ENCODE measurements at regions of chr2 and their contacts with region 1.

Region 1: GRCh38 chr2:177692828-177693269 is 300.3 kb downstream of the AGPS start:
- DNase-seq: peak; percentile 77
- H3K4me3 Mint-ChIP-seq: no peak overlapping the region
- H3K27ac Mint-ChIP-seq: peak overlapping the region; percentile 59
- H3K4me1 Mint-ChIP-seq: peaks cover 5% of the 10 kb centered on the region
- H3K27me3 Mint-ChIP-seq: no peaks in the 10 kb centered on the region
- CTCF ChIP-seq: peak; percentile 30

Region 2: DNA sequence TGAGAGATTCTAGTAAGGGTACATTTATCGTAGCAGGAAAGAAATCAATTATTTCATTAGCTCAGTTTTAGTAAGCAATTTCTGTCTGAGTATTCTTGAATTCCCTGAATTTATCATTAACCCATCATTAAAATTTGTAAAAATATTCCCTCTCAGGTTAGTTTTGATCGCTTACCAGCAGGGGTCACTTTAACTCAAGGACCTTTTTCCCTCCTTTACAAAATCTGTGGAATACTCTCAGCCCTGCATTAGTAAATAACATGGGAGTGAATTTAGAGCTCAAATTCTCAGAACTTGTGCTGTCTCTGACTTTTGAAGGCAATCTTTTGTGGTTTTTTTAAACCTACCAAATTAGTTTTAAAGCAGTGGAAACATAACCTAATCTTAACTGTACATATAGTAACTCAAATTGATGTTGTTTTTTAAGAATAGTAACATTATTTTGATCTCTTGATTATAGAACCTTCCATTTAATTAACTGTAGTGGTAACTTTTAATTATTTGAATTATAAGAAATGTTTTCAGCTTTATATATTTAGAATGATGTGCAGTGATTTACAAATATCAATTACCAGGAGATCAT is 203.0 kb before region 1 on chr2:
- CTCF ChIA-PET with region 1: interaction called, 4 read pairs
- POLR2A ChIA-PET with region 1: interaction called, 7 read pairs
- intact Hi-C with region 1: loop called (anchors 10 kb)
- DNase-seq: peak; percentile 52
- H3K4me3 Mint-ChIP-seq: no peak overlapping the region
- H3K27ac Mint-ChIP-seq: no peak overlapping the region
- H3K4me1 Mint-ChIP-seq: no peaks in the 10 kb centered on the region
- H3K27me3 Mint-ChIP-seq: no peaks in the 10 kb centered on the region
- CTCF ChIP-seq: peak; percentile 55

Region 3: DNA sequence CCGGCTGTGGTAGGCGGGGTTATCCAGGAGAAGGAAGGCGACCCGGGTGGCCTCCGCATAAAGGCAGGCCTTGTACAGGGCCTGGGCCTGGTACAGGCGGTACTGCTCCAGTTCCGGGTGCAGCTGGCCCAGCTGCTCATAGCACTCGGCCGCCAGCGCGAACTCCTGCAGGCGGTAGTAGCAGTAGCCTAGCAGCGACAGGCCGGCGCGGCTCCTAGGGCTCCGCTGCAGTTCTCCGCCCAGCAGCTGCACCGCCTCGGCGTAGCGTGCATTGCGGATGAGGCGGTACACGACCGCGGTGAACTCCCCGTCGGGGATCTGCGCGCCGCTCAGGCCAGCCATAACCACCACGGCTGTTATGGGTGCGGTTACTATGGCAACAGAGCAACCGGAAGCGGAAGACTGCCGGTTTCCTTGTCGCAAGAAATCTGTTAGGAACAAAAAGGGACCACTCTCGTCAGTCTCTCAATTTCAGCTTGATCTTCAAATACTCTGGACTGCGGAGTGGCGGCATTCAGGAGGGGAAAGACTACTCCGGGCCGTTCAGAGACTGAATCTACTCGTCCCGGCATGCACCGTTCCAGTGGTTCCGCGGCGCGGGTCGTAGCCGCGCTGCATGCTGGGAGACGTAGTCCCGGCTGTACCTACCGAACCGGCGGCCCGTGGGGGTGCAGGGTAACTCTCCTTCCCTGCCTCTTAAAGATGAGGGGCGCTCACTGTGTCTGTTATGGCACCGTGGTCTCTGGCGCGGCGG is 140.2 kb before region 1 on chr2:
- CTCF ChIA-PET with region 1: interaction called, 6 read pairs
- POLR2A ChIA-PET with region 1: no interaction called
- intact Hi-C with region 1: loop called (anchors 5 kb)
- DNase-seq: peak; percentile 84
- H3K4me3 Mint-ChIP-seq: peak overlapping the region; percentile 95
- H3K27ac Mint-ChIP-seq: peak overlapping the region; percentile 100
- H3K4me1 Mint-ChIP-seq: peaks cover 4% of the 10 kb centered on the region
- H3K27me3 Mint-ChIP-seq: no peaks in the 10 kb centered on the region
- CTCF ChIP-seq: no peak

Region 4: DNA sequence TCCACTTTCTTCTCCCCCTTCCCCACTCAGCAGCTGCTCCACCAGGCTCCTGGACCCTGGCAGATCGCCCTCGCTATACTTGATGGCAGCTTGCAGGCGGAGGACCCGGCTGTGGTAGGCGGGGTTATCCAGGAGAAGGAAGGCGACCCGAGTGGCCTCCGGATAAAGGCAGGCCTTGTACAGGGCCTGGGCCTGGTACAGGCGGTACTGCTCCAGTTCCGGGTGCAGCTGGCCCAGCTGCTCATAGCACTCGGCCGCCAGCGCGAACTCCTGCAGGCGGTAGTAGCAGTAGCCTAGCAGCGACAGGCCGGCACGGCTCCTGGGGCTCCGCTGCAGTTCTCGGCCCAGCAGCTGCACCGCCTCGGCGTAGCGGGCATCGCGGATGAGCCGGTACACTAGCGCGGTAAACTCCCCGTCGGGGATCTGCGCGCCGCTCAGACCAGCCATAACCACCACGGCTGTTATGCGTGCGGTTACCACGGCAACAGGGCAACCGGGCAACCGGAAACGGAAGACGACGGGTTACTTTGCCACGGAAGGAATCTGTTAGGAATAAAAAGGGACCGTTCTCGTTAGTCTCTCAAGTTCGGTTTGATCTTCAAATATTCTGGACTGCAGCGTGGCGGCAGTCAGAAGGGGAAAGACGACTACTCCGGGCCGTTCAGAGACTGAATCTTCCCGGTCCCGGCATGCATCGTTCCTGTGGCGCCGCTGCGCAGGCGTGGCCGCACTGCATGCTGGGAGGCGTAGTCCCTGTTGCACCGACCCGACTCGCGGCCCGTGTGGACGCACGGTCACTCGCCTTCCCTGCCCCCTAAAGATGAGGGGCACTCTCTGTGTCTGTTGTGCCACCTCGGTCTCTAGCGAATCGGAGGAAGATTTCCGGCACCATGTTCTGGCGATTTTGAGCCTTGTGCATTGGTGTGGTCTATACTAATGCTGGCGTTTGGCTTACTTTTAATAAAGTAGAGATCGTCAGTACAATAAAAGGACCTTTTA is 74.3 kb before region 1 on chr2:
- CTCF ChIA-PET with region 1: no interaction called
- POLR2A ChIA-PET with region 1: no interaction called
- intact Hi-C with region 1: loop called (anchors 5 kb)
- DNase-seq: peak; percentile 85
- H3K4me3 Mint-ChIP-seq: peak overlapping the region; percentile 91
- H3K27ac Mint-ChIP-seq: peak overlapping the region; percentile 100
- H3K4me1 Mint-ChIP-seq: peaks cover 6% of the 10 kb centered on the region
- H3K27me3 Mint-ChIP-seq: no peaks in the 10 kb centered on the region
- CTCF ChIP-seq: no peak

Region 5: GRCh38 chr2:177703159-177703558 is 10.3 kb after region 1 on chr2:
- CTCF ChIA-PET with region 1: interaction called, 13 read pairs
- POLR2A ChIA-PET with region 1: no interaction called
- intact Hi-C with region 1: no loop called
- DNase-seq: no peak
- H3K4me3 Mint-ChIP-seq: no peak overlapping the region
- H3K27ac Mint-ChIP-seq: peak overlapping the region; percentile 24
- H3K4me1 Mint-ChIP-seq: no peaks in the 10 kb centered on the region
- H3K27me3 Mint-ChIP-seq: peaks cover 26% of the 10 kb centered on the region
- CTCF ChIP-seq: no peak

Measured in MCF 10A (cell line).